IMR-90 (cell line): ENCODE measurements at regions of chr18 and their contacts with region 1.

Region 1: DNA sequence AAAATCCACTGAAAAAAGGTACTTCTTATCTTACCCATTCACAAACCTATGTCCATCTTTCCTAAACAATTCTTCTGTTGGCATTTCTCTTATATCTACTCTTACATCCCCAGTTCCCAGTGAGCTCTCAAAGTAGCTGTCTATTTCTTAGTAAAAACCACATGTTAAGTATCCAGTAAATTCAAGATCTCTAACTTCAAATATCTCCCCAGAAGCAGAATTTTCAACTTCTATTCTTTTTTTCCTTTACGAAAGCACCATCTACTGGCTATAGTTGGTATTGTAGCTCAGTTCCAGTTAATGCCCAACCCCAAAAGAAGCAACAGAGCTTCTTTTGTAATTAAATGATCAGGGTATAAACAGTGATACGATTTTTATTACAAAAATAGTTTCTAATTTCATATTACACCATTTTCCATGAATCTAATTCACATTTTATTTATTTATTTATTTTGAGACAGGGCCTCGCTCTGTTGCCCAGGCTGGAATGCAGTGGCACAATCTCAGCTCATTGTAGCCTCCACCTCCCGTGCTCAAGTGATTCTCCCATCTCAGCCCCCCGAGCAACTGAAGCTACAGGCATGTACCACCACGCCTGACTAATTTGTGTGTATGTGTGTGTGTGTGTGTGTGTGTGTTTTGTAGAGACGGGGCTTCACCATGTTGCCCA is 28.5 kb downstream of the HRH4 start:
- DNase-seq: peak; percentile 41
- ATAC-seq: peak; percentile 68
- H3K4me3 ChIP-seq: no peak overlapping the region
- H3K27ac ChIP-seq: no peak overlapping the region
- H3K4me1 ChIP-seq: peaks cover 2% of the 10 kb centered on the region
- H3K27me3 ChIP-seq: peaks cover 15% of the 10 kb centered on the region
- CTCF ChIP-seq: peak; percentile 74
- POLR2A ChIP-seq: no peak
- RAD21 ChIP-seq: peak; percentile 56

Region 2: DNA sequence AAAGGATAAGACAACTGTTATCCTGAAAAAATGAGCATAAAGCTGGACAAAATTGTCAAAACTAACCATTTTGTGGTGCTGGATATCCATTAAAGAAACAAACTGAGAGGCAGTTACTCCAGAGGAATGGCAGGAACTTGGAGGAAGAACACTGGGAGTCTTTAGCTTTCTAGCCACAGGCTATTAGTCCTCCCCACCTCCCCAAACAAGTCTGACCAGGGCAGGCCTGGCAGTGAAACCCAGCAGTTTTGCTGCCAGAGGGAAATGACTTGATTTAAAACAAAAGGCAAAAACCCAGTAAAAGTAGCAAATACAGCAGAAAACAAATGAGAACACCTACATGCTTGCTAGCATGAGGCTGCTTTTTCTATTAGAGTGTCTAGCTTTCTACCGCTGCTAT is 126.2 kb before region 1 on chr18:
- CTCF ChIA-PET with region 1: interaction called, 13 read pairs
- POLR2A ChIA-PET with region 1: no interaction called
- dilution Hi-C with region 1: no loop called
- in situ Hi-C with region 1: loop called (anchors 5 kb)
- intact Hi-C with region 1: loop called (anchors 1 kb)
- DNase-seq: peak; percentile 6
- ATAC-seq: peak; percentile 66
- H3K4me3 ChIP-seq: no peak overlapping the region
- H3K27ac ChIP-seq: no peak overlapping the region
- H3K4me1 ChIP-seq: 0 out of 2 replicates have a peak, but pooled peaks cover 1% of the 10 kb centered on the region
- H3K27me3 ChIP-seq: no peaks in the 10 kb centered on the region
- CTCF ChIP-seq: no peak
- POLR2A ChIP-seq: no peak
- RAD21 ChIP-seq: no peak

Region 3: DNA sequence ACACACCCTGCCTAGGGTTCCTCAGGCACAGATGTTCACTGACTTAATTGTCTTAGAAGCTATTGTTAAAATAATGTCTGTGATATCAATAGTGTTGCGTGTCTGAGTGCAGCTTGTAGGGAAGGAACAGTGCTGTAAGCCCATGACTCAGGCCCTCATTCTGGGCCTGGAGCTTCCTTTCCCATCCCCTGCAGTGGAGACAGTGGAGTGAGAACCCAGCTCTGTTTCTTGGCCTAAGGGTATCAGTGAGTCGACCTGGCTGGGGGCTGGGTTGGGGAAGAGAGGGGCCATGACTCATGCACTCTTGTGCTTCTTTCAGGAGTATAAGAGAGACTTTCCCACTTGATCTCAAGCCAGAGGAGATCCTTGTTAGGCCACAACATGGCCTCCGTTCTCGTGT is 78.2 kb after region 1 on chr18:
- CTCF ChIA-PET with region 1: no interaction called
- POLR2A ChIA-PET with region 1: interaction called, 18 read pairs
- dilution Hi-C with region 1: no loop called
- in situ Hi-C with region 1: no loop called
- intact Hi-C with region 1: no loop called
- DNase-seq: peak; percentile 59
- ATAC-seq: peak; percentile 49
- H3K4me3 ChIP-seq: no peak overlapping the region
- H3K27ac ChIP-seq: no peak overlapping the region
- H3K4me1 ChIP-seq: no peaks in the 10 kb centered on the region
- H3K27me3 ChIP-seq: peaks cover 9% of the 10 kb centered on the region
- CTCF ChIP-seq: no peak
- POLR2A ChIP-seq: no peak
- RAD21 ChIP-seq: no peak

Region 4: DNA sequence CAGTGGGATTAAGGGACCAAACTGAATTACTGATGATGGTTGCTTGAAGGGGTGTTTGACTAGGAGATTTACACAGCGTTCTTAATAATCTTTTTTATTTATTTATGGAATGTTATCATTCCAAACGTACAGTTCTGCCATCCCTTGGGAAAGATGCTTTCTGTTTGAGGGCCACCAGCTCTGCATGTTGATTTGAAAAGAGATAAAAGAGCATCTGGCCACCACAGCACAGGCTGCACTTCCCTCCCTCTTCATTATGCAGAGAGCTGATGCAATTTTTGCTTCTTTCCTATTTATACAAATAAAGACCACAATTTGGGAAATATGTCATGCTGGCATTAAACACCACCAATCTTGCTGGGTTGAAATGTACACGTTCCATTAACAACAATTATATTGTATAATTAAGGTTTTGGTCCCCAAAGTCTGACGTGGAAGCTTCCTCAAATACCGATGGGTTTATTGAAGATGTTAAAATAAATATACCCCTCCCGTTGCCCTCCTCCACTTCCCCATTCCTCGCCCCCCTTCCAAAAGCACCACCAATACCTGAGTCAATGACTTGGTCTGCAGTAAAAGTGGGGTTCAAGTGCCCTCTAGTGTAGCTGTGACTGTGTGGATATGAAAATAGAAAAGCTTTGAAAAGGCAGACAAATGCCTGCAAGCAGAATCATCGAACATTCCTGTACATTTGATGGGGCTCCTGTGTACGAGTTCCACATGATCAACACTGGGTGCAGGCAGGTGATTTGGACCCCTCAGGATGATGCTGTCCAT is 183.4 kb after region 1 on chr18:
- CTCF ChIA-PET with region 1: no interaction called
- POLR2A ChIA-PET with region 1: no interaction called
- dilution Hi-C with region 1: no loop called
- in situ Hi-C with region 1: no loop called
- intact Hi-C with region 1: loop called (anchors 2 kb)
- DNase-seq: peak; percentile 39
- ATAC-seq: peak; percentile 75
- H3K4me3 ChIP-seq: no peak overlapping the region
- H3K27ac ChIP-seq: peak overlapping the region; percentile 80; the same call in 1 of the 2 replicates
- H3K4me1 ChIP-seq: peaks cover 14% of the 10 kb centered on the region
- H3K27me3 ChIP-seq: no peaks in the 10 kb centered on the region
- CTCF ChIP-seq: peak; percentile 51
- POLR2A ChIP-seq: no peak
- RAD21 ChIP-seq: peak; percentile 57